AG04449 (cell line): ENCODE measurements at regions of chr6 and their contacts with region 1.

Region 1: GRCh38 chr6:25556516-25556915 is 95.5 kb upstream of the SCGN start:
- DNase-seq: peak; percentile 12
- H3K4me3 ChIP-seq: no peak overlapping the region
- CTCF ChIP-seq: peak; percentile 77

Region 2: GRCh38 chr6:25218346-25218745 is 338.2 kb before region 1 on chr6:
- CTCF ChIA-PET with region 1: interaction called, 124 read pairs
- POLR2A ChIA-PET with region 1: no interaction called
- DNase-seq: no peak
- H3K4me3 ChIP-seq: no peak overlapping the region
- CTCF ChIP-seq: no peak

Region 3: DNA sequence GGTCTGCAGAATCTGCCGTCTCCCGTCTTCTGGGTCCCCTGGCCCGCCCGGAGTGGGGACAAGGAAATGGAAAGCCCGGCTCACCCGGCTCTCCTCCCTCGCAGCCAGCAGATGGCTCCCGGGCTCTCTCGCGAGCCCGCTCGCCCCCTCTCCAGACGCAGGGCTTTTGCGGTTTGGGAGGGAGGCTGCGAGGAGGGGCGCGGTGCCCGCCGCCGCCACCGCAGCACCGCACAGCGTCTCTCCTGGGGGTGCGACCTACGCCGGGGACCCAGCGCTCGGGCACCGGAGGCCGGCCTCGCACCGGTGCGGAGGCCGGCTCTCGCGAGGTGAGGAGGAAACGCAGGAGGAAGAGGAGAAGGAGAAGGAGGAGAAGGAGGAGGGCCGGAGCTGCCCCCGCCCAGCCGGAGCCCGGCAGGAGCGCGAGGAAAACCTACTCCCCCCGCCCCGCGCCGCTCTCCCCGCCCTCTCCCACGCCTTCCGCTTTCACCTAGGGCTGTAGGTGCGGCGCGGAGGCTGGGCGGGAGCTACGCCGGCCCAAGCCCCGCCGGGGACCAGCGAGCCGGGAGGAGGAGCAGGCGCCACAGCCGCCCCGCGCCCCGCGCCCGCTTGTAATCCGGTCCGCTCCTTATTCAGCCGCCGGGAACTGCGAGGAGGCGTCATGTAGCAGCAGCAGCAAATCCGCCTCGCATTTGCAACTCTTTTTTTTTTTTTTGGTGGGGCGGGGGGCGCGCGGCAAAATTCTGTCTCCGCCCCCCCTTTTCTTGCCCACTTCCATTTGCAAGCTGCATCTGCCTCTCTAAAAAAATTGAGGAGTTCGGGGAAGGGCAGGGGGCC is 277.4 kb before region 1 on chr6 and contains the start of gene CARMIL1:
- CTCF ChIA-PET with region 1: interaction called, 71 read pairs
- POLR2A ChIA-PET with region 1: no interaction called
- DNase-seq: no peak
- H3K4me3 ChIP-seq: peak within 1 kb of the TSS; percentile 71
- CTCF ChIP-seq: peak; percentile 73

Region 4: DNA sequence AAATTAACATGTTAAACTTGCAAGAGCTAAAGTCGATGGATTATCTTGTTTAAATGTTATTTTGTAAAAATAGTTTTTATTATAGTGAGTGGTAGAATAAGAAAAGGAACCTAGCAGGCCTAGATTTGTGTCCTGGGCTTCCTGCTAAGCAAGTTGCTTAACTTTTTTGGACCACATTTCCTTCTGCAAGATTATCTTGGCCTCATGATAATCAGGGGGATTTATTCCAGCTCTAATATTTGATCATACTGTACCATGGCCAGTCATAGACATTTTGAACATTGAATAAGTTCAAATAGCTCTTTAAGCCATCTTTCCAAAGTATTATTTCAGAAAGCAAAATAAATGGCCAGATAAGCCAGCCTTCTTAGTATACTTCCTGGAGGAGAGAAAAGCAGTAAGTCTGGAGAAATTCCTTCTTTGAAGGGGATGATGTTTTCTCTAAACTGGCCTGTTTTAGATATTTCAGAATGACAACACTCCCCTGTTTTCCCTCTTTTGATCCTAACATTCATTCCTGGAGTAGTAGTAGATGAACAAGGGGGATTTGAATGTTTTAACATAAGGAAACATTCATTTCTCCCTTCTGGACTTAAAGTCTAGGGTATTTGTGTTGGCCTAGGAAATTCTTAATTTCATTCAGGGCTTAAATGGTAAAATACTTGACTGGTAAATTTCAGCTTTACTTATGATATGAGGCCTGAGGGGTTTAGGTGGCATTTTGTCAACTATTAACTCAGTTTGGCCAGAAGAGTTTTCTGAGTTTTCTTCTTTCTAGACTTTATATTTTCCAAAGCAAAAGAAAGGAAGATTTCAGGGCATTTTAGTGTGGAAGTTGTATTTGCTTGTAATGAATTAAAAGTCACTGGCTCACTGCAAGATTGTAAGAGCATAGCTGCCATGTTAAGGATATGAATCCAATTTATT is 13.3 kb before region 1 on chr6:
- CTCF ChIA-PET with region 1: interaction called, 11 read pairs
- POLR2A ChIA-PET with region 1: no interaction called
- DNase-seq: no peak
- H3K4me3 ChIP-seq: no peak overlapping the region
- CTCF ChIP-seq: no peak

Region 5: GRCh38 chr6:25717866-25718740 is 161.6 kb after region 1 on chr6:
- CTCF ChIA-PET with region 1: no interaction called
- POLR2A ChIA-PET with region 1: no interaction called
- DNase-seq: no peak
- H3K4me3 ChIP-seq: no peak overlapping the region
- CTCF ChIP-seq: peak; percentile 35